Natural killer cell (primary cell): ENCODE measurements at regions of chr10 and their contacts with region 1.

Region 1: DNA sequence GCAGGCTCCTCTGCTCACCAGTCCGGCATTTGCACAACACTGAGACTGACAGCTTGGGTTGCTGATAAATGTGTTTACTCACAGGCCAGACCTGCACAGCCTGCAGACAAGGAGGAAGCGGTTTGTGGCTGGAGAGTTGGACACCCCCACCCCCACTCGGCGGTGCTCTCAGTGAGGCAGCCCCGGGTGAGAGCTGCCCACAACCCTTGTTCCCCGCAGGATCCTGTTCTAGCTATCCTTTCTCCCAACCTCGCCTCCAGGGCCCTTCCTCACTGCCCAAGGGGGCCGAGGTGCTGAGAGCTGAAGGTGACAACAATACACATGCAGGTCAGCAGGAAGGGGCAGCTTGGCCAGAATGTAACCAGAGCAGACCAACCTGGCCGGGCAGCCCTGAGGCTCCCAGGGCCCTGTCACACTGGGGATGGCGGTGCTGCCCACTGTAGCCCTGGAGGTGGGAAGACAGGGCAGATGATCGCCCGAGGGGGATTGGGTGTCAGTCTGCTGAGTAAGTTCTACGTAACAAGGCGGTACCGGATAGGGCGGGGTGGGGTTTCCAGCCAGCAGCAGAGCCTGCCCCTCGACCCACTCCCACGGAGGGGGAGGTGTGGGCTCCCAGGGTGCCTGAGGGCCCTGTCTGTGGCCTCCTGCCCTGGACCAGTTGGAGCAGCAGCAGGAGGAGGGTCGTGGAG is 2.1 kb upstream of the ADAM8 start:
- DNase-seq: peak; percentile 85 to 87
- ATAC-seq: peak; percentile 63 to 84 (median 73)
- H3K4me3 ChIP-seq: peak overlapping the region; percentile 35
- H3K4me3 Mint-ChIP-seq: peak overlapping the region; percentile 92
- H3K27ac ChIP-seq: peak overlapping the region; percentile 95
- H3K27ac Mint-ChIP-seq: peak overlapping the region; percentile 98
- H3K4me1 ChIP-seq: peaks cover 66% of the 10 kb centered on the region
- H3K4me1 Mint-ChIP-seq: peaks cover 28 to 49% of the 10 kb centered on the region in 2 donors
- H3K27me3 ChIP-seq: no peaks in the 10 kb centered on the region
- H3K27me3 Mint-ChIP-seq: no peaks in the 10 kb centered on the region
- CTCF ChIP-seq: no peak

Region 2: GRCh38 chr10:133257489-133258065 is 21.1 kb before region 1 on chr10:
- intact Hi-C with region 1: loop called (anchors 2 kb)
- DNase-seq: peak in 1 of 2 donors; percentile 53
- ATAC-seq: peak in 1 of 3 donors; percentile 9
- H3K4me3 ChIP-seq: no peak overlapping the region
- H3K4me3 Mint-ChIP-seq: peak overlapping the region; percentile 61
- H3K27ac ChIP-seq: peak overlapping the region; percentile 80
- H3K27ac Mint-ChIP-seq: peak overlapping the region; percentile 34 to 81
- H3K4me1 ChIP-seq: peaks cover 55% of the 10 kb centered on the region
- H3K4me1 Mint-ChIP-seq: peaks cover 23 to 46% of the 10 kb centered on the region in 2 donors
- H3K27me3 ChIP-seq: no peaks in the 10 kb centered on the region
- H3K27me3 Mint-ChIP-seq: peaks cover 0 to 2% of the 10 kb centered on the region in 2 donors
- CTCF ChIP-seq: peak; percentile 19

Region 3: DNA sequence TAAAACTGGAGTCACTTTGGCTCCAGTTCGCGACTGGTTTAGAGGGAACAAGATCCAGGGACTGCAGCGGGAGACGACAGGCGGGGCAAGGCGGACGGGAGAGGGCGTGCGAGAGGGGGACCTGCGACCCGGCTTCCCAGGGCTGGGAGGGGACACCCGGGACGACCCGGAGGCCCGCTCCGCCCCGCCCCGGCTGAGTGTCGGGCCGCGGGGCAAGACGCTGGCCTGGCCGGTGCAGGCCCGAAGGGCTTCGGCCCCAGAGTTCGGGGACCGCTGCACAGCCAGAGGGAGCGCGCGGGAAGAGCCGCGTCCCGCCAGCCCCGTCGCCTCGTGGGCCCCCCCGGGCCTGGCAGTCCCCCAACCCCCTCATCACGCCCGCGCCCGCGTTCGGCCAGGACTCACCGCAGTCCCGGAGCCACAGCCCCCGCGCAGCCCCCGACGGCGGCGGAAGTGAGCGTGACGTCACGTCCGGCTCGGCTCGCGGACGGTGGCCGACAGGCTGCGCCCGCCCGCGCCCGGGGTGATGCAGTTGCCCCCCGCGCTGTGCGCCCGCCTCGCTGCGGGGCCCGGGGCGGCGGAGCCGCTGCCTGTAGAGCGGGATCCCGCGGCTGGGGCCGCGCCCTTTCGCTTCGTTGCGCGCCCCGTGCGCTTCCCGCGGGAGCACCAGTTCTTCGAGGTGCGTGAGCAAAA is 29.8 kb after region 1 on chr10 and contains the starts of genes TUBGCP2 and ZNF511:
- intact Hi-C with region 1: loop called (anchors 1 kb)
- DNase-seq: peak; percentile 94 to 95
- ATAC-seq: peak; percentile 66 to 84 (median 76)
- H3K4me3 ChIP-seq: peak within 1 kb of the TSS; percentile 89
- H3K4me3 Mint-ChIP-seq: peak within 1 kb of the TSS; percentile 99
- H3K27ac ChIP-seq: peak within 1 kb of the TSS; percentile 99
- H3K27ac Mint-ChIP-seq: peak within 1 kb of the TSS; percentile 99
- H3K4me1 ChIP-seq: peaks cover 31% of the 10 kb centered on the region
- H3K4me1 Mint-ChIP-seq: peaks cover 21 to 34% of the 10 kb centered on the region in 2 donors
- H3K27me3 ChIP-seq: no peaks in the 10 kb centered on the region
- H3K27me3 Mint-ChIP-seq: no peaks in the 10 kb centered on the region
- CTCF ChIP-seq: no peak
- total RNA-seq, gene TUBGCP2: 74.3 to 81.8 (median 78.7) TPM
- total RNA-seq, gene ZNF511: 28.1 to 39.0 (median 32.4) TPM

Region 4: GRCh38 chr10:133394064-133394663 is 115.4 kb after region 1 on chr10 and contains the start of gene MTG1:
- intact Hi-C with region 1: loop called (anchors 5 kb)
- DNase-seq: peak; percentile 94 to 97
- ATAC-seq: peak; percentile 73 to 88 (median 84)
- H3K4me3 ChIP-seq: peak within 1 kb of the TSS; percentile 54
- H3K4me3 Mint-ChIP-seq: peak within 1 kb of the TSS; percentile 94
- H3K27ac ChIP-seq: peak within 1 kb of the TSS; percentile 49
- H3K27ac Mint-ChIP-seq: peak within 1 kb of the TSS; percentile 87 to 90
- H3K4me1 ChIP-seq: peaks cover 57% of the 10 kb centered on the region
- H3K4me1 Mint-ChIP-seq: peaks cover 45 to 48% of the 10 kb centered on the region in 2 donors
- H3K27me3 ChIP-seq: no peaks in the 10 kb centered on the region
- H3K27me3 Mint-ChIP-seq: no peaks in the 10 kb centered on the region
- CTCF ChIP-seq: no peak
- total RNA-seq, gene MTG1: 64.3 to 76.3 (median 67.1) TPM

Region 5: DNA sequence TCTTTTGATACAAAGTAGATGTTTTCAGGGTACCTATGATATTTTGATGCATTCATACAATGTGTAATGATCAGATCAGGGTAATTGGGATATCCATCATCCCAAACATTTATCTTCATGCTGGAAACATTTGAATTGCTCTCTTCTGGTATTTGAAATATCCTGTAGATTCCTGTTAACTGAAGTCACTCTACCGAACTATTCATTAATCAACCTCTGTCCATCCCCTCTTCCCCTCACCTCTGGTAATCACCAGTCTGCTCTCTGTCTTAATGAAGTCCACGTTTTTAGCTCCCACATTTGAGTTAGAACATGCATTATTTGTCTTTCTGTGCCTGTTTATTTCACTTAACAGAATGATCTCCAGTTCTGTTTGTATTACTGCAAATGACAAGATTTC is 126.6 kb after region 1 on chr10:
- intact Hi-C with region 1: no loop called
- DNase-seq: no peak
- ATAC-seq: no peak
- H3K4me3 ChIP-seq: no peak overlapping the region
- H3K4me3 Mint-ChIP-seq: no peak overlapping the region
- H3K27ac ChIP-seq: no peak overlapping the region
- H3K27ac Mint-ChIP-seq: peak overlapping the region in 1 of 2 donors; percentile 51
- H3K4me1 ChIP-seq: peaks cover 18% of the 10 kb centered on the region
- H3K4me1 Mint-ChIP-seq: peaks cover 53 to 57% of the 10 kb centered on the region in 2 donors
- H3K27me3 ChIP-seq: no peaks in the 10 kb centered on the region
- H3K27me3 Mint-ChIP-seq: no peaks in the 10 kb centered on the region
- CTCF ChIP-seq: no peak